ENCODE measurements at regions of chr15 and their contacts with region 1.

Region 1: DNA sequence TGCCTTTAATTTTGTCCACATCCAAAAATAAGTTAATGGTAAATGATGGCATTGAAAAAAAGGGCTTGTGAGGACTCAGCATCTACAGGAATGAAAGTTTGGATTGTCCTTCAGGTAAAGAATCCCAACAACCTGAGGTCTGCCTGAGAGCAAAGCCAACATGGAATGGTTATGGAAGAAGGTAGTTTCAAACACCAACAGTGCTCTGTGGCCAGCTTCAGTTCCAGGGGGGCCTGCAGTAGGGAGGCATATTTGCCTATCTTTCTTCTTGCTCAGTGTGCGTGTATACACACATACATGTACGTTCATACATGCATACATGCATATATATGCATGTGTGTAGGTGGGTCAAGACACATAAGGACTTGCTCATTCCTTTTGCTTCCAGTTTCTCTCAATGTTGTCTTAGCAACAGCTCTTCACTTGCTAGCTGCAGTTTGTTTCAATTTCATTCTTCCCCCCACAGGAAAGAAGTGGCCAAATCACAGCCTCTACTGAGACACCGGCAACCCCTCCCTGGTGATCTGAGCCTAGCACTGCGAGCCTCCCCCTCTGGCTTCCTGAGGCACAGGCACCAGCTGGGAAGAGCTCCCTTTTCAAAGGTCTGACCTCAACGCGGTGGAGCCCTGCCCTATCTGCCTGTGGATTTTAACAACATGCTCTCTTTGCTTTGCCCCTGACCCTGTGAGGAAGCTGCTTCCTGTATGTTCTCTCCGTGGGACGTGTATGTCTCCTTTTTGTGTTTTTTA is 146.2 kb downstream of the KLF13 start:
- DNase-seq: peak in 2 of 3 donors; percentile 62 to 64
- H3K4me3 ChIP-seq: peak overlapping the region in 4 of 7 experiments; percentile 15 to 54 (median 18)
- H3K27ac ChIP-seq: no peak overlapping the region
- H3K4me1 ChIP-seq: peaks cover 0 to 18% (median 10%) of the 10 kb centered on the region in 4 experiments
- H3K27me3 ChIP-seq: no peaks in the 10 kb centered on the region

Region 2: GRCh38 chr15:31412824-31413223 is 60.0 kb before region 1 on chr15:
- CTCF ChIA-PET with region 1: no interaction called
- POLR2A ChIA-PET with region 1: no interaction called
- DNase-seq: no peak
- H3K4me3 ChIP-seq: no peak overlapping the region
- H3K27ac ChIP-seq: no peak overlapping the region
- H3K4me1 ChIP-seq: peaks cover 0 to 3% (median 0%) of the 10 kb centered on the region in 4 experiments
- H3K27me3 ChIP-seq: no peaks in the 10 kb centered on the region

Region 3: GRCh38 chr15:31458591-31459399 is 14.0 kb before region 1 on chr15:
- CTCF ChIA-PET with region 1: interaction called, 22 read pairs
- POLR2A ChIA-PET with region 1: no interaction called
- DNase-seq: no peak
- H3K4me3 ChIP-seq: no peak overlapping the region
- H3K27ac ChIP-seq: no peak overlapping the region
- H3K4me1 ChIP-seq: no peaks in the 10 kb centered on the region
- H3K27me3 ChIP-seq: no peaks in the 10 kb centered on the region

Region 4: DNA sequence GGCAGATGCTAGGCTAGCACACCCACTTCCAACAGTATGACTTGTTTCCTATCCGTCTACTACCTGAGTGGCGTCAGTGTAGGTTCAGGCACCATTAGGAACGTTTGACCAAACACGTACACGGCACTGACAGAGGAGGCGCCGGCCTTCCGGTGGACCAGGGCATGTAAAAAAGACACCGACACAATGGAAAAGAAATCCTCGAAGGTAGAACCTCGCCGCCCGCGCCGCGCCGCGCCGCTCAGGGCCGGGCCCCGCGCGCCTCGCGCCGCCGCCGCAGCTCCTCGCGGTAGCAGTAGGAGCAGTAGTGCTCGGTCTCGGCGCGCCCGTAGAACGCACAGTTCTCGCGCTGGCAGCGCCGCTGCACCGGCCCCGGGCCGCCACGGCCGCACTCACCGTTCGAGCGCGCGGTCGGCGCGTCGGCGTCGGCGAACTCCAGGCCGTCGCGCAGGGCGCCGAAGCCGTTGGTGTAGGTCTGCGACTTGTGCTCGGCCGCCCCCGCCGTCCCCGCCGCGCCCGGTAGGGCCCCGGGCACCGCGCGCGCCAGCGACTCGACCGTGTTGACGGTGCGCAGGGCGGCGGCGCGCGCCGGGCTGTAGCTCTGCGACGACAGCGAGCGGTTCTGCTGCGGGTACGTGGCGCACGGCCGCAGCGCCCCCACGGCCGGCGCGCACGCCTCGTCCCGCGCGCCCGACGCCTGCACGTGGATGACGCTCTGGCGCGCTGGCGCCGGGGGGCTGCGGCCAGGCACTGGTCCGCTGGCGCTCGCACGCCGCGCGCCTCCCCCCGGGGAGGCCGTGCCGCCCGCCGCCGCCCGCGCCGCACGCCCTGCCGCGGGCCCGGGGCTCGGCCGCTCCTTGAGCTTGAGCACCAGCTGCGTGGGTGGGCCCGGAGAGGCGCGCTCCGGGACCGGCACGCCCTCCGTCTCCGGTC is 10.5 kb after region 1 on chr15:
- CTCF ChIA-PET with region 1: interaction called, 36 read pairs
- POLR2A ChIA-PET with region 1: no interaction called
- DNase-seq: peak; percentile 25 to 69 (median 60)
- H3K4me3 ChIP-seq: peak overlapping the region in 6 of 7 experiments; percentile 6 to 62 (median 43)
- H3K27ac ChIP-seq: no peak overlapping the region
- H3K4me1 ChIP-seq: peaks cover 0 to 7% (median 6%) of the 10 kb centered on the region in 4 experiments
- H3K27me3 ChIP-seq: peaks cover 0 to 60% (median 30%) of the 10 kb centered on the region in 5 experiments

Region 5: GRCh38 chr15:31824024-31824423 is 351.2 kb after region 1 on chr15:
- CTCF ChIA-PET with region 1: no interaction called
- POLR2A ChIA-PET with region 1: no interaction called
- DNase-seq: no peak
- H3K4me3 ChIP-seq: no peak overlapping the region
- H3K27ac ChIP-seq: no peak overlapping the region
- H3K4me1 ChIP-seq: no peaks in the 10 kb centered on the region
- H3K27me3 ChIP-seq: no peaks in the 10 kb centered on the region

Measured in common myeloid progenitor, CD34-positive (primary cell).